Activated CD4-positive, alpha-beta T cell treated with anti-CD3 and anti-CD28 coated beads for 36 hours (primary cell): ENCODE measurements at regions of chr2 and their contacts with region 1.

Region 1: DNA sequence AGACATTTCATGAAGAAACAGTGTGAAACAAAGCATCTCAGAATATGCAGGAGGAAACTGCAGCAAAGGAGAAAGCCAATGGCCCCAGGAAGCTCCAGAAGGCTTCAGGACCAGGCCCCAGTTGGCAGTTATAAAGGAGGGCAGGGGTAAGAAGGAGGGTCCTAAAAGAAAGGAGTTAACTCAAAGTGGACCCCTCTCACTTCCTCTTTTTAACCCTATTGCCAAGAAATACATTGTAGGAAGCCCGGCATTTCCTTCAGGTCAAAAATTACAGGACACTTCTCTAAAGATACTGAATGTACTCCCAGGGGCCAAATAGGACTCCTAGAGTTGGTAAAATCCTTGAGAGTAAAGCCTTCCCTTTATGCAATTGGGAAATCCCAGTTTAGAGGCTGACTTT is 77.1 kb upstream of the TGFA start:
- DNase-seq: no peak
- ATAC-seq: no peak
- H3K4me3 Mint-ChIP-seq: no peak overlapping the region
- H3K27ac Mint-ChIP-seq: no peak overlapping the region
- H3K4me1 Mint-ChIP-seq: no peaks in the 10 kb centered on the region
- H3K27me3 Mint-ChIP-seq: peaks cover 2% of the 10 kb centered on the region

Region 2: GRCh38 chr2:70616168-70616694 is 14.5 kb before region 1 on chr2:
- CTCF ChIA-PET with region 1: interaction called, 26 read pairs
- POLR2A ChIA-PET with region 1: no interaction called
- intact Hi-C with region 1: no loop called
- DNase-seq: no peak
- ATAC-seq: no peak
- H3K4me3 Mint-ChIP-seq: no peak overlapping the region
- H3K27ac Mint-ChIP-seq: no peak overlapping the region
- H3K4me1 Mint-ChIP-seq: no peaks in the 10 kb centered on the region
- H3K27me3 Mint-ChIP-seq: peaks cover 2% of the 10 kb centered on the region

Region 3: DNA sequence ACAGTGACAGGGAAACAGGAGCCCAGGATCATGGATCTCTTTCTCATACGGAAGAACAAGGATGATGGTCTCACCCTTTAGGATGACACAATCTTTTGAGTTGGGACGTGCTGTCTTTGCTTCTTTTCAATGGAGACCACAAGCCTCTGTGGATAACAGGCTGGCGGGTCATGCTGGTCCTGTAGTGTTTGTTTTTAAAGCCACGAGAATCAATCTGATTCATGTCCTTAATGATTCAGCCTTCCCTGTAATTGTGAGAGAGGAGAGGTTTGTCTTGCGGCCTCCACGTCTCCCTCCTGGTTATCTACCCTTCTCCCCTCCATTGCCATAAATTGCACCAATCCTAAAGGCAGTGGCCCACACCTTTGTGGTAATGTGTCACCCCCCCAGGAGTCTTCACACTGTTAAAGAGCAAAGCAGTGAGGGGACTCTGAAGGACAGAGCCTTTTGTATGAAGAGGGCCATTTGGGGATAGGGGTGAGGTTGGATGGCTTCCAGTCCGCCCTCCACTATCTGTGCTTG is 10.6 kb after region 1 on chr2:
- CTCF ChIA-PET with region 1: interaction called, 11 read pairs
- POLR2A ChIA-PET with region 1: no interaction called
- intact Hi-C with region 1: no loop called
- DNase-seq: no peak
- ATAC-seq: peak; percentile 73
- H3K4me3 Mint-ChIP-seq: no peak overlapping the region
- H3K27ac Mint-ChIP-seq: no peak overlapping the region
- H3K4me1 Mint-ChIP-seq: peaks cover 31% of the 10 kb centered on the region
- H3K27me3 Mint-ChIP-seq: no peaks in the 10 kb centered on the region